Heart left ventricle (tissue), 16 donors: ENCODE measurements at regions of chr5 and their contacts with region 1.

Region 1: DNA sequence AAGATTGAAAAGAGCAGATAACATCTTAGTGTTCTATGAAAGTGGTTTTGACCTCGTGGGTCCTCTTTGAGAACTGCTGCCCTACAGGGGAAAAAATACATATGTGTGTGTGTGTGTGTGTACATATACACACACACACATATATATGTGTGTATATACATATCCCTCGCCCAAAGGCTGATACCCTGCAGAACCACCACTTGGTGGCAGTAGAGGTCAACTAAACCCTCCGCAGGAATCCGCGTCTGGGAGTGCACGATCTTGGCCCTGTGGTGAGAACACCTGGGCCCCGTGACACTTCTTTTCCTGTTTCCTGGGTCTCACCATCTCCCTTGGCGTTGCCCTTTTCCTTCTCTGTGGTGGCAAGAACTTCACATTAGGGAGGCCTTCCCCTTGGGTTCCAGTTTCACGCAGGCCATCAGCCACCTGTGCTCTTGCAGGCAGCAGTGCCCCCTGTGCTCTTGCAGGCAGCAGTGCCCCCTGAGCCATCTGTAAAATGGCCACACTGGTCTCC is 8.2 kb downstream of the IL9 start:
- DNase-seq: peak; percentile 39 to 67 (median 51)
- ATAC-seq: peak; percentile 68 to 90 (median 86)
- H3K4me3 ChIP-seq: no peak overlapping the region
- H3K27ac ChIP-seq: no peak overlapping the region
- H3K4me1 ChIP-seq: peaks cover 0 to 9% (median 3%) of the 10 kb centered on the region in 12 donors
- H3K27me3 ChIP-seq: peaks cover 0 to 39% (median 2%) of the 10 kb centered on the region in 9 donors
- CTCF ChIP-seq: peak; percentile 72 to 90 (median 84)
- POLR2A ChIP-seq: no peak

Region 2: DNA sequence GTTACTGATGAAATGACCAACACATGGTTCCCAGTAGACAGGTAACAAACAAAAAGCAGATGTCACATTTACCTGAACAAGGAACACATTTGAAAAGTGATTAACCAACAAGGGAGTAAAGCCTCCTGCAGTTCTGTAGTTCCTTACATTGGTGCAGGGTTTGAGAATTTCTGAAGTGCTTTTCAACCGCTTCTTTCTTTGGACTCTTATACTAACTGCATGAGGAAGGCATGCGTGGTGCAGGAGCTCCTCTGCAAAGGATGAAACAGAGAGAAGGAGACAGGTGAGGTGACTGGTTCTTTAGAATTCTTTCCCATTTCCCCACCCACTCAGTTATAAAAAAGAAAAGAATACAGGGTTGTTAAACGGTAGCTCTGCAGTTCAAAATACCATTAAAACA is 12.9 kb after region 1 on chr5:
- intact Hi-C with region 1: no loop called
- DNase-seq: no peak
- ATAC-seq: no peak
- H3K4me3 ChIP-seq: no peak overlapping the region
- H3K27ac ChIP-seq: no peak overlapping the region
- H3K4me1 ChIP-seq: no peaks in the 10 kb centered on the region
- H3K27me3 ChIP-seq: peaks cover 0 to 74% (median 13%) of the 10 kb centered on the region in 9 donors
- CTCF ChIP-seq: no peak
- POLR2A ChIP-seq: no peak

Region 3: GRCh38 chr5:135944967-135945560 is 57.7 kb after region 1 on chr5:
- intact Hi-C with region 1: loop called in 1 of 10 experiments (anchors 2 kb)
- DNase-seq: peak in 4 of 5 donors; percentile 28 to 56 (median 41)
- ATAC-seq: peak in 3 of 4 donors; percentile 46 to 59 (median 58)
- H3K4me3 ChIP-seq: no peak overlapping the region
- H3K27ac ChIP-seq: no peak overlapping the region
- H3K4me1 ChIP-seq: no peaks in the 10 kb centered on the region
- H3K27me3 ChIP-seq: peaks cover 0 to 11% (median 0%) of the 10 kb centered on the region in 9 donors
- CTCF ChIP-seq: peak; percentile 61 to 87 (median 80)
- POLR2A ChIP-seq: no peak

Region 4: DNA sequence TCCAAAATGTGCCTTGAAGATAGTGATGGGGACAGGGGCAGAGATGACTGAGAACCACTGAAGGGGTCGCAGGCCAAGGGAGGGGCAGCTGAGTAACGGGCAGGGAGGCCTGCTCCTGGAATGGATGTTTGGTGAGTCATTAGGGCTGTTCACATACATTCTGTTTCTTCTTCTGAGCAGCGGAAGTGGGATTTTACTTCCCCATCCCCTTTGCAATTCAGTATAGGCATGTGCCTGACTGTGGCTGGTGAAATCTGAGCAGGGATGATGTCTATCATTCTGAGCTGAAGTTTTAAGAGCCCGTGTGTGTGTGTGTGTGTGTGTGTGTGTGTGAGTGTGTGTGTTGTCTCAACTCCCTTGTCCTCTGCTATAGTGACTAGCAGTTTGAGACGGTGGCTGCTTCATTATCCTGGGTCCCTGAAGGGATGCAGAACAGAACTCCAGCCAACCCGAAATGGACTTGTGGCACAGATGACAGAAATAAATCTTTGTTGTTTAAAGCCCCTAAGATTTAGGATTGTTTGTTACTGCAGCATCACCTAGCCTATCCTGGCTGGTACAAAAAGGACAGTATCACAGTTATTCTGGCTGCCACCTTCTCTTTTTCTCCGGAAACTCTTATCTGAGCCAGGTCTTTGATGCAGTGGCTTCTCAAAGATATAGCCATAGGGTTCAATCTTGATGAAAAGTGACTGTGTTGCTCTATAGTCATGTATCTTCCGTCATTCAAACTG is 112.2 kb after region 1 on chr5:
- intact Hi-C with region 1: no loop called
- DNase-seq: no peak
- ATAC-seq: peak; percentile 28 to 78 (median 53)
- H3K4me3 ChIP-seq: no peak overlapping the region
- H3K27ac ChIP-seq: peak overlapping the region in 2 of 12 donors; percentile 9 to 87
- H3K4me1 ChIP-seq: peaks cover 0 to 44% (median 2%) of the 10 kb centered on the region in 12 donors
- H3K27me3 ChIP-seq: no peaks in the 10 kb centered on the region
- CTCF ChIP-seq: no peak
- POLR2A ChIP-seq: no peak

Region 5: DNA sequence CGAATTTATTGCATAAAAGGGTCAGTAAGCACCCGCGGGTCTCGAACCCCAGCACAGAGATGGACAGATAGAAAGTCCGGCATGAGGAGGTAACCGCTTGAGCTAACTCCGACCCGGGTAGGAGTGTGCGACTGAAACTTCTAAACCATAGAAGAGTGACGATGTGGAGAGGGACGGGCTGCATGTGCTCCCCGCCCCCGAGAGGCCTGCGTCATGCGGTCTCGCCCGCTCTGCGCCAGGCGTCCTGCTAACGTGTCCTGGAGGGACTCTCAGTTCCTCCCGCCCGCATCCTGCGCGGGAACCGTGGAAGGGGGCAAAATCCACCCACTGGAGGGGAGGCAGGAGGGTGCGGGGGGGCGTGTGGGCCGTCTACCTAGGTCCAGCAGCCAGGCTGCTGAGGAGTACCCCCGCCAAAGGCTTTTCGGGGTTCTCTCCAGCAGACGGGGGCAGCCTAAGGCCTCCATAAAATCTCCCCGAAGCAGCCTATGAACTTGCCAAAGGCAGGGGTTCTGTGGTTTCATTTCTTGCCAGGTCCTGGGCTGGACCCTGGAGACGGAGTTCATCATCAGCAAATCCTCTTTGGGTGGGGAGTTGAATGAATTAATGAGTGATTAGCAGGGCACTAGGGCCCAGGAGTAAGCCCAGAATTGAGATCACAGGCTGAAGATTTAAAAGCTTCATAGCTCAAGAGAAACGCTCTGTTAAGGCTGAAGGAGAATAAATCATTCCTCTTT is 193.2 kb after region 1 on chr5:
- intact Hi-C with region 1: loop called in 5 of 10 experiments (anchors 5 to 10 kb)
- DNase-seq: peak; percentile 86 to 92 (median 89)
- ATAC-seq: peak; percentile 93 to 96 (median 94)
- H3K4me3 ChIP-seq: peak overlapping the region in 11 of 12 donors; percentile 11 to 63 (median 44)
- H3K27ac ChIP-seq: peak overlapping the region; percentile 38 to 87 (median 74)
- H3K4me1 ChIP-seq: peaks cover 0 to 35% (median 12%) of the 10 kb centered on the region in 12 donors
- H3K27me3 ChIP-seq: peaks cover 0 to 8% (median 0%) of the 10 kb centered on the region in 9 donors
- CTCF ChIP-seq: no peak
- POLR2A ChIP-seq: peak in 1 of 2 donors; percentile 44

Region 6: DNA sequence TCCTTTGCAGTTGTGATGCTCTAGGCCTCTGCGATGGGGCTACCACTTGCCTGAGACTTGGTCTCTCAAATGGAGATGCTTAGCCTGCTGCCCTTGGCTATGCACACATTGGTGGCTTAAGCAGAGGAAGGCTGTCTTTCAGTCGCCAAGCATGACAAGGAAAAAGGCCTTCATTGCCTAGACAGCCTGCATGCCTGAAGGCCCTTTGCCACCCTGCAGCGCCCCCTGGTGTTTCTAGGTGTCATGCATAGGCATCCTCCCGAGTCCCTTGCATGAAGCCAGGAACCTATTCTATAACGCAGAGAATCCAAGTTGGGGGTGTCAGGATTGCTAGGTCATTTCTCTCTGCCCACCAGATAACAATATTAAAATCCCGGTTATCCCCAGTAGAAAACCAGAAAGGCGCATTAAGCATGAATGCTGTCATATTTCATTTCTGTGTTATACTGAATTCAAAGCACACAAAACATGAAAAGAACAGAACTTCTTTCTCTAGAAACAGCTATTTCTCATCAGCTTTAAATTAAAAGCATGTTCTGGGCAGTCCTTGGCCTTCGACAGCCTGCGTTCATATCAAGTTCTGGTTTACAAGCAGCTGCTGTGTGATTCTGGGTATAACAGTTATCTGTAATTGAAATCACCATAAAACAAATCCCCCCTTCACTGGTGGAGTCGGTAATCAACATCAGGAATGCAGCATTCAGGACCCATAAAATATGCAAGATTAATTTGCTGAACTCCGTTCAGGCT is 537.6 kb after region 1 on chr5:
- intact Hi-C with region 1: loop called in 1 of 10 experiments (anchors 10 kb)
- DNase-seq: peak; percentile 42 to 77 (median 51)
- ATAC-seq: peak; percentile 42 to 69 (median 60)
- H3K4me3 ChIP-seq: no peak overlapping the region
- H3K27ac ChIP-seq: no peak overlapping the region
- H3K4me1 ChIP-seq: no peaks in the 10 kb centered on the region
- H3K27me3 ChIP-seq: no peaks in the 10 kb centered on the region
- CTCF ChIP-seq: peak; percentile 34 to 65 (median 58)
- POLR2A ChIP-seq: no peak